Mammary epithelial cell (primary cell): ENCODE measurements at regions of chr3 and their contacts with region 1.

Region 1: DNA sequence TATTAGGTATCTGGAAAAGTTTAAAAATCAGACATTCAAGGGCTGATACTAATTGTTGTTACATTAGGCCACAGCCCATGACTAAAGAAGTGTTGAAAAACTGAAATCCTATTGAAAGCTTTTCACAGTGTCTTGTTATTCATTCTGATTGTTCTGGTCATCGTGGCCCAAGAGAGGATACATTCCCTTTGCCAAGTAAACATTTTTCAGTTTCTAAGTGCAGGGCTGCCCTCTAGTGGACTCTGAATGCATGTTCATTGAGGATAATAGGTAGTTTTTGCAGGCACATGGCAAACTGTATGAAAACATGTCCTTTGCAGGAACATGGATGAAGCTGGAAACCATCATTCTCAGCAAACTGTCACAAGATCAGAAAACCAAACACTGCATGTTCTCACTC is 181.1 kb downstream of the MYRIP start:
- DNase-seq: peak; percentile 55
- H3K4me3 ChIP-seq: no peak overlapping the region
- H3K27ac ChIP-seq: no peak overlapping the region
- H3K4me1 ChIP-seq: no peaks in the 10 kb centered on the region
- H3K27me3 ChIP-seq: no peaks in the 10 kb centered on the region
- CTCF ChIP-seq: peak; percentile 72 to 73

Region 2: DNA sequence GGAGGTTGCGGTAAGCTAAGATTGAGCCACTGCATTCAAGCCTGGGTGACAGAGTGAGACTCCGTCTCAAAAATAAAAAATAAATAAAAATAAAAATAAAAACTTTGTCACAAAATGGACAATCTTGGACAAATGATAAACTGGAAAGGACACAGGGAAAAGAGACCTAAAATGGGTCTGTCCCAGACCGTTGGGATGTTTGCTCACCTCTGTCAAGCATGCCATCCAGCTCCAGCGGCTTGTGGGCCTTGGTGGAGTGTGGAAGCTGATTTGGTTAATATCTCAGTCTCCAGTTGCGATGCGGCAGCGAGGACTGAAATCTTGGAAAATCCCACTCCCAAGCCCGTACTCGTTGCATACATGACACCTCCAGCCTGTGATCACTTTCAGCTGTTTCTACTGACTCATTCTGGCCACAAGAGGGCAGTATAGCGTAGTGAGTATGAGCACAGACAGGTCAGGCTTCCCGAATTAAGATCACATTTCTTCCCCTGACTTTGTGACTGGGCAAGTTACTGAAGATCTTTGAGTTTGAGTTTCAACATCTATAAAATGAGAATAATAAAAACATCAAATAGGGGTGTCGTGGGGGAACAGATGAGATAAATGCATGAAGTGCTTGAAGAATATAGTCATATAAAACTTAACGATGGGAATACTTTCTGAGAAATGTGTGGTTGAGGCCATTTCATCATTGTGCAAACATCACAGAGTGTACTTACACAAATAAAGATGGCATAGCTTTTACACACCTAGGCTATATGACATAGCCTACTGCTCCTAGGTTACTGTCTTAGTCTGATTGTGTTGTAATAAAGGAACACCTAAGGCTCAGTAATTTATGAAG is 542.7 kb before region 1 on chr3:
- CTCF ChIA-PET with region 1: no interaction called
- dilution Hi-C with region 1: no loop called
- in situ Hi-C with region 1: no loop called
- intact Hi-C with region 1: loop called (anchors 5 kb)
- DNase-seq: peak; percentile 79
- H3K4me3 ChIP-seq: no peak overlapping the region
- H3K27ac ChIP-seq: no peak overlapping the region
- H3K4me1 ChIP-seq: no peaks in the 10 kb centered on the region
- H3K27me3 ChIP-seq: no peaks in the 10 kb centered on the region
- CTCF ChIP-seq: peak; percentile 88 to 93

Region 3: GRCh38 chr3:39637807-39638206 is 352.7 kb before region 1 on chr3:
- CTCF ChIA-PET with region 1: no interaction called
- dilution Hi-C with region 1: no loop called
- in situ Hi-C with region 1: no loop called
- intact Hi-C with region 1: loop called (anchors 1 kb)
- DNase-seq: peak; percentile 63
- H3K4me3 ChIP-seq: no peak overlapping the region
- H3K27ac ChIP-seq: no peak overlapping the region
- H3K4me1 ChIP-seq: peaks cover 9% of the 10 kb centered on the region
- H3K27me3 ChIP-seq: no peaks in the 10 kb centered on the region
- CTCF ChIP-seq: peak; percentile 49 to 52

Region 4: GRCh38 chr3:39707314-39707909 is 283.1 kb before region 1 on chr3:
- CTCF ChIA-PET with region 1: no interaction called
- dilution Hi-C with region 1: no loop called
- in situ Hi-C with region 1: loop called in 1 of 2 experiments (anchors 25 kb)
- intact Hi-C with region 1: loop called (anchors 1 kb)
- DNase-seq: no peak
- H3K4me3 ChIP-seq: no peak overlapping the region
- H3K27ac ChIP-seq: no peak overlapping the region
- H3K4me1 ChIP-seq: no peaks in the 10 kb centered on the region
- H3K27me3 ChIP-seq: peaks cover 5% of the 10 kb centered on the region
- CTCF ChIP-seq: peak; percentile 57 to 67

Region 5: GRCh38 chr3:39809181-39809994 is 181.1 kb before region 1 on chr3 and contains the start of gene MYRIP:
- CTCF ChIA-PET with region 1: no interaction called
- dilution Hi-C with region 1: no loop called
- in situ Hi-C with region 1: loop called in 1 of 2 experiments (anchors 25 kb)
- intact Hi-C with region 1: loop called (anchors 1 kb)
- DNase-seq: no peak
- H3K4me3 ChIP-seq: peak within 1 kb of the TSS in 2 of 3 experiments; percentile 27 to 41
- H3K27ac ChIP-seq: no peak within 1 kb of the TSS
- H3K4me1 ChIP-seq: peaks cover 8% of the 10 kb centered on the region
- H3K27me3 ChIP-seq: peaks cover 38% of the 10 kb centered on the region
- CTCF ChIP-seq: no peak
- total RNA-seq, gene MYRIP: 0.17 TPM in 1 of 2 donors, not detected in the other